Activated CD4-positive, alpha-beta memory T cell treated with anti-CD3 and anti-CD28 coated beads for 36 hours (primary cell): ENCODE measurements at regions of chr20 and their contacts with region 1.

Region 1: DNA sequence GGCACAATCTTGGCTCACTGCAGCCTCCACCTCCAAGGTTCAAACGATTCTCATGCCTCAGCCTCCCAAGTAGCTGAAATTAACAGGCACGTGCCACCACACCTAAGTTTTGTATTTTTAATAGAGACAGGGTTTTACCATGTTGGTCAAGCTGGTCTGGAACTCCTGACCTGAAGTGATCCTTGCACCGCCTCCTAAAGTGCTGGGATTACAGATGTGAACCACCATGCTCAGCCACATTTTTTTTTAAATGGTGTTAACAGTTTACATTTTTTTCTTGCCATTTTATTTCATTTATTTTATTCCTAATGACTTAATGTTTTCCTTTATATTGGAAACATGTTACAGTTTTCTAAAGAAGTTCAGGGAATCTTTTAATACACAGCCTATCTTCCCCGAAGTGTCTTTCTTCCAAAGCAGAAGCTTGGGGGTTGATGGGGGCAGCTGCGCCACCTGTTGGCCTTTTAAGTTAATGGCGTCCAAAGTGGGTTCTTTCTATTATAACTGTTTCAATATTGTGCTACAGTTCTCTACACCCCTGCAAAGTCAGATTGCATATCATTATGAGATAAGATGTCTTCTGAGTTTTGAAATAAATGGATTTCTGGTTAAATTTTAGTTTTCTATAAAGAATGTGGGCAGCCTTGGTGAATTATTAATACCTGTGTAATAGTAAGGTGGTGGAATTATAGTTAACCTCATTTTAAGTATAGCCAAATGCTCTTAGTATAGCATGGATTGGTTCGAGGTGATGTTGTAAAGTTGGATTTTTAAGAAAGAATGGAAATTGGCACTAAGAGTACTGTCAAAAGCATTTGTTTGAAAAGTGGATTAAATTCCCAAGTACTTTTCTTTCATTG is 42.0 kb upstream of the PLCG1 start:
- DNase-seq: peak; percentile 71
- H3K4me3 Mint-ChIP-seq: no peak overlapping the region
- H3K27ac Mint-ChIP-seq: peak overlapping the region; percentile 90
- H3K4me1 Mint-ChIP-seq: peaks cover 22% of the 10 kb centered on the region
- H3K27me3 Mint-ChIP-seq: no peaks in the 10 kb centered on the region

Region 2: GRCh38 chr20:40980106-40980827 is 115.1 kb before region 1 on chr20:
- CTCF ChIA-PET with region 1: interaction called, 373 read pairs
- POLR2A ChIA-PET with region 1: no interaction called
- intact Hi-C with region 1: no loop called
- DNase-seq: no peak
- H3K4me3 Mint-ChIP-seq: no peak overlapping the region
- H3K27ac Mint-ChIP-seq: no peak overlapping the region
- H3K4me1 Mint-ChIP-seq: no peaks in the 10 kb centered on the region
- H3K27me3 Mint-ChIP-seq: peaks cover 11% of the 10 kb centered on the region

Region 3: DNA sequence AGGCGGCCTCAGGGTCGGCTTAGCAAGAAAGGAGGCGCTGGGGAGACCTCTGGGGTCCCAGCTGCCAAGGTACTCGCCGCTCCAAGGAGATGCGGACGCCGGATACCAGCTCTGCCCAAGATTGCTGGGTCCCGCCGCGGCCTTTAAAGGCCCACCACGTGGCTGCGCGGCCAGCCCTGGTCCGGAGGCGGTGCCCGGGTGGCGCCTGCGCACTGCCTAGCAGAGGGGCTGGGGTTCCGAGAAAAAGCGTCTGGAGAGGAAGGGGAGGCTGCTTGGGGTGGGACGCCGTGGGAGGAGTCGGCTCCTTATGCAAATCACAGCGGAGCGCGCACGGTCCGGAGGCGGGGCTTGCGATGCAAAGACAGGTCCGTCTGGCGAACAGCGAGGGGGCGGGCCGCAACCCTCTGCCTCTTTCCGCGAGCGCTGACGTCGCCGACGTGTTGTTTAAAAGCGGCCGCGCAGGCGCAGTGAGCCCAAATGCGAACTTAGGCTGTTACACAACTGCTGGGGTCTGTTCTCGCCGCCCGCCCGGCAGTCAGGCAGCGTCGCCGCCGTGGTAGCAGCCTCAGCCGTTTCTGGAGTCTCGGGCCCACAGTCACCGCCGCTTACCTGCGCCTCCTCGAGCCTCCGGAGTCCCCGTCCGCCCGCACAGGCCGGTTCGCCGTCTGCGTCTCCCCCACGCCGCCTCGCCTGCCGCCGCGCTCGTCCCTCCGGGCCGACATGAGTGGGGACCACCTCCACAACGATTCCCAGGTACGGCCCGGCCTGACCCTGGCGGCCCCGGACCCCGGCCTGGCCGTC is 66.8 kb before region 1 on chr20 and contains the start of gene TOP1:
- CTCF ChIA-PET with region 1: interaction called, 16 read pairs
- POLR2A ChIA-PET with region 1: no interaction called
- intact Hi-C with region 1: loop called (anchors 2 kb)
- DNase-seq: peak; percentile 100
- H3K4me3 Mint-ChIP-seq: peak within 1 kb of the TSS; percentile 85
- H3K27ac Mint-ChIP-seq: peak within 1 kb of the TSS; percentile 89
- H3K4me1 Mint-ChIP-seq: peaks cover 47% of the 10 kb centered on the region
- H3K27me3 Mint-ChIP-seq: no peaks in the 10 kb centered on the region
- total RNA-seq, gene TOP1: 128 TPM

Region 4: DNA sequence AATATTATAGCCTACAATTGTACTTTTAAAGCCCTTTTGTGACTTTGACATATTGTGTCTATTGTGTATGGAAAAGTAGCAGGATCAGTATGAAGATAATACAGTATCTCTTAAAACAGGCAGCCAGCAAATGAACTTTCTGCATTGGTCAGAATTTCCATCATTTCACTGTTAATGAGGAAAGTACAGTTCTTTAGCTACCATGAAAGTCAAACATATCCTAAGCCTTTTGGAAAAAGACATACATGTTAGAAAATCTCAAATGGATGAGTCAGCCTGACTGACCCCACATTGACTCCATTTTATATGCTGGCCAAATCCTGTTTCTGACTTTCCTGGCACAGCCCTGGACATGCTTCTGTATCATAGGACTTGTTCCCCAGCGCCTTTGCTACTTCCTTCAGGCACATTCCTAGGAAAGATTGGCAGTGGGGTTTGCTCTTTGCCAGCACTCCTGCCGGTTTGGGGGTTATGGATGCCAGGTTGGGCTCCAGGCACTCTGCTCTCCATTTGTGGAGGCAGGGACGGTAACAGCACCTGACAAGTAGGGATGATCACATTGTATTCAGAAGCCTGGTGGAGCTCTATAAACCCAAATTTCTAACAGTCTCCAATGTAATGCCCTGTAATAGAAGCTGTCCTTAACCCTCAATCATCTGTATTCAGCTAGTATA is 23.0 kb before region 1 on chr20:
- CTCF ChIA-PET with region 1: interaction called, 22 read pairs
- POLR2A ChIA-PET with region 1: interaction called, 3 read pairs
- intact Hi-C with region 1: loop called (anchors 2 kb)
- DNase-seq: no peak
- H3K4me3 Mint-ChIP-seq: no peak overlapping the region
- H3K27ac Mint-ChIP-seq: peak overlapping the region; percentile 66
- H3K4me1 Mint-ChIP-seq: peaks cover 79% of the 10 kb centered on the region
- H3K27me3 Mint-ChIP-seq: no peaks in the 10 kb centered on the region

Region 5: DNA sequence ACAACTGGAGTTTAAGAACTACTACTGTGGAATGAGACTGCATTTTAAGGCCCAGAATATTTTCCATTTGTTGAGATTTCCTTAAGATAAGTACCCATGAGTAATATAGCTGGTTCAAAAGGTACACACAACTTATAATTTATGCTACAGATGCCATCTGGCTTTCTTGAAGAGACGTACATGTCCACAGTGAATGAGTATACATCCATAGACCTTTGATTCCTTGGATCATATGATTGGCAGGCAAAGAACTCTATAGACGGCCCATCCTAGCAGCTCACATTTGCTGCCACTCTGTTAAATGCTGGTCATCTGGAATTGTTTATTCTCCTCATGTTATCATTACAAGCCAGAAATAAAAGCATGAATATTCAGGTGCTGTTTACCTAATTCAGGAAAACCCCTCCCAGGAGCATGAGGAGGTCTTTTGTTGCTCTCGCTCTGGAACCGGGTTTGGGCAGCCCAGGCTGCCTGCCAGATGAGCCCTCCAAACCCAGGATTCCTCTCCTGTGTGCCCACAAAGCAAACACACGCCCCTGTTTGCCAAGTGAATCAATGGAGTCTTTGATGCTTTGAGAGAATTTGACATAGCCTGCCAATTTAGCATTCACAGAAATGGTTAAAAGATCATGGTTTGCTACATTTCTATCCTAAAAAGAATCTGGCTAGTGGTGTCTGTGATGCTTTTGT is 24.4 kb after region 1 on chr20:
- CTCF ChIA-PET with region 1: interaction called, 19 read pairs
- POLR2A ChIA-PET with region 1: no interaction called
- intact Hi-C with region 1: no loop called
- DNase-seq: no peak
- H3K4me3 Mint-ChIP-seq: no peak overlapping the region
- H3K27ac Mint-ChIP-seq: no peak overlapping the region
- H3K4me1 Mint-ChIP-seq: peaks cover 15% of the 10 kb centered on the region
- H3K27me3 Mint-ChIP-seq: no peaks in the 10 kb centered on the region